H1 (cell line): ENCODE measurements at regions of chr18 and their contacts with region 1.

Region 1: DNA sequence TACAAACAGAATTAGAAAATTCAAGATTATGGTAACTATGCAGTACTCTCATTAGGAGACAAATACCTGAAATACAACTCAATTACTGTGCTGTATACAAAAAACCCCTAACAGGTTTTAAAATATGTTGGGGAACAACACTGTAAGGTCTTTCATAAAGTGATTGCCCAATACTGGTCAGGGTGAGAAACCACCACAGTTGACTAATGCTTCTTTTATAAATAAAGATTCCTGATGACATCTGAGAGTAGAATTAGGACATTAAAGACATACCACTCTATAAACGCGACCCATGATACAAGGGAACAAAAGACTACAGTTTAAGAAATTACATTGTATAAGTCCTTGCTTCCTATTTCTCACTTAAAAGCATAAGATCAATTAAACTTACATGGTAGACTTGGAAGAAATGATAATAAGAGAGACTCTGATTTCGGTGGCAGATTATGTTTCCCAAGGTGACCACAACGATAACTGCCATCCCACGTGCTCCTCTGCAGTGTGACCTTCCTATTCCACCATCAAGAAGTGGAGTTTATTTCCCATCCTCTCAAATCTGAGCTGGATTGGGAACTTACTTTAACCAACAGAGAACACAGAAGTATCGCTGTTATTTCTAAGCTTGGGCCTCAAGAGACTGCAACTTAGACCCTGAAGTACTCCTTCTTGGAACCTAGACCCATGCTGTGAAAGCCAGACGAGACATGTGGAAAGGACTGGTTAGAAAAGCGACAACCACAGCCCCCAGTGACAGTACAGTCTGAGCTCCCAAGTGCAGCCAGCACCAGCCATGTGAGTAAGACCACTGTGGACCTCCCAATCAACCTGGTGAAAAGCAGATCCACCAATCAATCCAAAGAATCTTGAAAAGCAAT is 52.3 kb downstream of the ZNF521 start:
- DNase-seq: no peak
- H3K4me3 ChIP-seq: no peak overlapping the region
- H3K27ac ChIP-seq: no peak overlapping the region
- H3K4me1 ChIP-seq: no peaks in the 10 kb centered on the region
- H3K27me3 ChIP-seq: no peaks in the 10 kb centered on the region
- CTCF ChIP-seq: no peak
- EP300 ChIP-seq: no peak
- POLR2A ChIP-seq: no peak
- RAD21 ChIP-seq: no peak

Region 2: GRCh38 chr18:24923138-24923537 is 376.5 kb before region 1 on chr18:
- CTCF ChIA-PET with region 1: no interaction called
- POLR2A ChIA-PET with region 1: no interaction called
- DNase-seq: no peak
- H3K4me3 ChIP-seq: no peak overlapping the region
- H3K27ac ChIP-seq: no peak overlapping the region
- H3K4me1 ChIP-seq: peaks cover 0 to 7% (median 2%) of the 10 kb centered on the region in 4 experiments; a peak in 3 of 7 replicates
- H3K27me3 ChIP-seq: no peaks in the 10 kb centered on the region
- CTCF ChIP-seq: no peak
- EP300 ChIP-seq: no peak
- POLR2A ChIP-seq: no peak
- RAD21 ChIP-seq: no peak

Region 3: GRCh38 chr18:25310045-25310444 is 10.4 kb after region 1 on chr18:
- CTCF ChIA-PET with region 1: interaction called, 12 read pairs
- POLR2A ChIA-PET with region 1: no interaction called
- DNase-seq: no peak
- H3K4me3 ChIP-seq: no peak overlapping the region
- H3K27ac ChIP-seq: no peak overlapping the region
- H3K4me1 ChIP-seq: no peaks in the 10 kb centered on the region; a peak in 1 of 7 replicates
- H3K27me3 ChIP-seq: no peaks in the 10 kb centered on the region
- CTCF ChIP-seq: peak in 1 of 3 experiments; percentile 30; a peak in 2 of 4 replicates
- EP300 ChIP-seq: no peak
- POLR2A ChIP-seq: no peak
- RAD21 ChIP-seq: peak in 1 of 2 experiments; percentile 24; a peak in 1 of 4 replicates

Region 4: DNA sequence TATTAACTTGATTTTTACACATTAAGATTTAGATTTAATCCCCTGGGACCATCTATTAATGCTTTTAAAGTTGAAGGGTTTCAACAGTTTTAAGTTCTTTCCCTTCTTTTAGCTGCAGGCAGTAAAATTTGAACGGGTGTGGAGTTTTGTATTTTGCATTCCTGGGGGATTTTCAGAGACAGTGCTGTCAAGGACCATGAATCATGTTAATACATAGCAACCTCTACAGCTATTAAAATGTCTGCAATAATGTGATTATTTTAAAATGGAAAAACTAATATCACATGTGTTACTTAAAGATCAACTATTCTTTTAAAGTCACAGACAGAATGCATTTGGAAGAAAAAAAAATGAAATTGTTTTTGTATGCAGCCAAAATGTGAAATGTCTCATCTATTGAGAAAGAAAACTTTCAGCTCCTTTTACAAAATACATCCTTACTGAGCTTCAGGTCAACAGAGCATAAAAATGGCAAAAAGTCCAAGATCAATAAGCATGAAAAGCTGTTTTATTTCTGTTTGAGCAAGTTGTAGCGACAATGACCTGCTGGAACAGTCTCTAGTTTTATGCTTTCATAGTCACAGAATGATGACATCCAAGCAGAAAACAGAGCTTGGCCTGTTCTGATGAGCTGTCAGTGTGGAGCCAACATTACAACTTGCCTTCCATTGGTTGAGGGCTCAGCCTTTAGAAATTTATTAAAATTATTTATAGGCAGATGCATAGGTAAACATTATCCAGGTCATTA is 73.9 kb after region 1 on chr18:
- CTCF ChIA-PET with region 1: no interaction called
- POLR2A ChIA-PET with region 1: no interaction called
- DNase-seq: no peak
- H3K4me3 ChIP-seq: no peak overlapping the region
- H3K27ac ChIP-seq: no peak overlapping the region
- H3K4me1 ChIP-seq: no peaks in the 10 kb centered on the region
- H3K27me3 ChIP-seq: no peaks in the 10 kb centered on the region
- CTCF ChIP-seq: no peak
- EP300 ChIP-seq: no peak
- POLR2A ChIP-seq: no peak
- RAD21 ChIP-seq: no peak